ENCODE measurements at regions of chr19 and their contacts with region 1.

Region 1: DNA sequence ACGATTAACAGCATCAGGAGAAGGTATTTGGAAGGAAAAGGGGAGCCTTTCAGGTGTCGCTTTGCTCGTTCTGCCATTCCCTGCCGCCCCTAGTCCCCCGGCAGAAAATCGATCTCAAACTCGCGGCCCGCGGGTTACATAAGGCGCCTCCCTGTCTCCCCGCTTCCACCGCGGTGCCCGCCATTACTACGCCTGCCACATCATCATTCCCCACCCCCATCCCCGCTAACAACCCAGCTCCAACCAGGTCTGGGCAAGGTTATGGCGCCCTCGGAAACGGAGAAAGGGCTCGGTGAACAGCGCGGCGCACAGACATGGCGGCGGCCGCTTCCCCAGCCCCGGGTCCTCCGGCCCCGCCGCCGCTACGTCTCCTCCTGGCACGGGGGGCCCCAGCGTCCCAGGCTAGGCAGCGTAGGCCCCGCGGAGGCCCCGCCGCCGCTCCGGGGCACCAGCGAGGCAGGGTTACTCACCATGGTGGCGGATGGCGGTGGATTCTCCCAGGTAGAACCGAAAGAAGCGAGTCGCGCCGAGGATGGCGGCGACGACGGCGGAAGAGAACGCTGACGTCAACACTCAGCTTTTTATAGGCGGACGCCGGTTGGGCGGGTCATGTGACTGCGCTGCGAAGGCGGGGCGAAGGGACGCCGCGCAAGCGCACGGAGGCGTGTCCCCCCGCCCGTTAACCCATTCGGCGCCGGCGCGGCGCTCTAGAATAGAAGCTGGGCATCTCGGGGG is at the start of gene EEF2:
- DNase-seq: peak; percentile 77 to 91 (median 86)
- H3K4me3 ChIP-seq: peak within 1 kb of the TSS; percentile 65 to 100 (median 92)
- H3K27ac ChIP-seq: peak within 1 kb of the TSS; percentile 73 to 99 (median 97)
- H3K27me3 ChIP-seq: no peaks in the 10 kb centered on the region
- CTCF ChIP-seq: peak in 19 of 56 donors; percentile 5 to 48 (median 25)
- total RNA-seq, gene EEF2: 863 to 1,554 (median 1,176) TPM

Region 2: DNA sequence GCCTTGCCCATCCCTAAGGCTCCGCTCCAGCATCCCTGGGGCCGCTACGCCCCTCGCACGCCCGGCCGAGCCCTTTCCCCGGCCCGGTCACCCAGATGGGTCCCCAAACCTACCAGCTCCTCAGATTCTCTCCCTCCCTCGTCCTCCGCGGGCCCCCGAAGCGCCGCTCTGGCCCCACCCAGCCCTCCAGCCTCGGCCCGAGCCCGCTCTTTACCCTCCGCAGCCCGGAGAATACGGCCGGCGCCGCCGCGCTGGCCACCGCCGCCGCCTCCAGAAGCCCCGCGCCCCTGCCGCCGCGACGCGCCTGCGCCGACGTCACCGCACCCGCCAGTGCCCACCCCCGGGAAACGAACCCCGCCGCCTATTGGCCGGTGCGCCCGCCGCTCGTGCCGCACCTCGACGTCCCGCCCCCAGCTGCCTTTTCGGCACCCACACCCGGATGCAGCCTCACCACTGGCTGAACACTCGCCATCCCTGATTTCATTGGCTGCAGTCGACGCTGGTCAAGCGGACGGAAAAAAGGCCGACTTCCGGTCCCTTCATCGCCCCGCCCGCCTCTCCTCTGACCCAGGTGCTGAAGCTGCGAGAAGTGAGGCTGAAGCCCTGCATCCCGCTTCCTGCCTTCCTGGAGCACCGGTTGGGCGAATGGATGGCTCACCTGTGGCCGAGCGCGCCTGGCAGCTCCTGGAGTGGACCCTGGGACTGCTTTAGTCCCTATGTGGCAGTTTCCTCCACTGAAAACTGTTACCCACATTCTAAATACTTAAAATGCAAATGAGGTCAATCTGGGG is 14.1 kb before region 1 on chr19 and contains the start of gene DAPK3:
- intact Hi-C with region 1: loop called (anchors 2 kb)
- DNase-seq: peak; percentile 94 to 99 (median 98)
- H3K4me3 ChIP-seq: peak within 1 kb of the TSS; percentile 49 to 99 (median 88)
- H3K27ac ChIP-seq: peak within 1 kb of the TSS in 57 of 59 donors; percentile 43 to 97 (median 85)
- H3K27me3 ChIP-seq: no peaks in the 10 kb centered on the region
- CTCF ChIP-seq: peak in 42 of 56 donors; percentile 9 to 67 (median 40)
- total RNA-seq, gene DAPK3: 47.9 to 98.2 (median 67.8) TPM

Region 3: DNA sequence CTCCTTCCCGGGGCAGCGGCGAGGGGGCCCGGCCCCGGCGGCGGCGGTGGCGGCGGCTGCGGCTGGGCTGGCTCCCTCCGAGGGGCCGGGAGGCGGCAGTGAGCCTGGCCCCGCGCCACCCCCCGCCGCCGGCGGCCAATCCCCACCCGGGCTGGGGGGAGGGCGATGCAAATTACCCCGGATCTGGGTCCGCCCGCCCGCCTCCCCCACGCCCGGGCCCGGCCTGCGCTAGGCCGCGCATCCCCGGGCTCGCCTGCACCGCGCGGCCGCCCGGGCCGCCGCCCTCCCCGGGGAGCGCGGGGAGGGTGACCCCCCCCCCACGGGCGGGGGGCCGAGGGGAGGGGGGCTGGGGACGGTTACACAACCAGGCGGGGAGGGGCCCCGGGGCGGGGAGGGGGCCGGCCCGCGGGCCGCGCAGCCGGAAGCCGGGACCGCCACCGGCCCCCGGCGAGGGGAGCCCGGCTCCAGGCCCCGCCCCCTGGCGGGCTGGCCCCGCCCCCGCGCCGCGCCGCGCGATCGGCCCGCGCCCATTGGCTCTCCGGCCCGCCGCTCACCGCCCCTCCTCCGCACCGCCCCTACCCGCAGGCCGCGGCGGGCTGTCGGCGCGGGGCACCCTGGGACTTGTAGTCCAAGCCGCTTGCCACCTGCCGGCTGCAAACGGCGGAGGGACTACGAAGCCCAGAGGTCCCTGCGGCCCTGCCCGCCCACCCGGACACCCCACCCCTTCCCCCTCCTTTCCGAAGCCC is 80.5 kb after region 1 on chr19:
- intact Hi-C with region 1: loop called in 1 of 2 experiments (anchors 2 kb)
- DNase-seq: peak; percentile 86 to 99 (median 96)
- H3K4me3 ChIP-seq: peak overlapping the region; percentile 59 to 97 (median 86)
- H3K27ac ChIP-seq: peak overlapping the region in 53 of 59 donors; percentile 68 to 100 (median 97)
- H3K27me3 ChIP-seq: no peaks in the 10 kb centered on the region
- CTCF ChIP-seq: peak in 10 of 56 donors; percentile 6 to 24 (median 14)

Region 4: GRCh38 chr19:4182084-4182810 is 197.2 kb after region 1 on chr19 and contains the starts of genes ANKRD24 and SIRT6:
- intact Hi-C with region 1: loop called (anchors 5 kb)
- DNase-seq: peak; percentile 93 to 98 (median 97)
- H3K4me3 ChIP-seq: peak within 1 kb of the TSS; percentile 61 to 100 (median 92)
- H3K27ac ChIP-seq: peak within 1 kb of the TSS in 57 of 59 donors; percentile 9 to 95 (median 84)
- H3K27me3 ChIP-seq: no peaks in the 10 kb centered on the region
- CTCF ChIP-seq: peak in 37 of 56 donors; percentile 4 to 63 (median 30)
- total RNA-seq, gene ANKRD24: 15.8 to 64.8 (median 32.6) TPM
- total RNA-seq, gene SIRT6: 13.5 to 37.9 (median 21.8) TPM

Region 5: GRCh38 chr19:4457654-4458395 is 472.8 kb after region 1 on chr19 and contains the start of gene UBXN6:
- intact Hi-C with region 1: loop called in 1 of 2 experiments (anchors 5 kb)
- DNase-seq: peak; percentile 97 to 99 (median 99)
- H3K4me3 ChIP-seq: peak within 1 kb of the TSS; percentile 52 to 85 (median 72)
- H3K27ac ChIP-seq: peak within 1 kb of the TSS in 57 of 59 donors; percentile 17 to 95 (median 83)
- H3K27me3 ChIP-seq: no peaks in the 10 kb centered on the region
- CTCF ChIP-seq: peak in 47 of 56 donors; percentile 11 to 65 (median 35)
- total RNA-seq, gene UBXN6: 110 to 244 (median 164) TPM